CD14-positive monocyte (primary cell): ENCODE measurements at regions of chr20 and their contacts with region 1.

Region 1: GRCh38 chr20:5550733-5551529 is 199.3 kb upstream of the SHLD1 start:
- DNase-seq: no peak
- H3K4me3 ChIP-seq: no peak overlapping the region
- H3K4me3 Mint-ChIP-seq: no peak overlapping the region
- H3K27ac ChIP-seq: peak overlapping the region in 1 of 2 donors; percentile 1
- H3K27ac Mint-ChIP-seq: peak overlapping the region in 3 of 7 donors; percentile 24 to 64 (median 47)
- H3K4me1 ChIP-seq: no peaks in the 10 kb centered on the region
- H3K4me1 Mint-ChIP-seq: no peaks in the 10 kb centered on the region
- H3K27me3 ChIP-seq: no peaks in the 10 kb centered on the region
- H3K27me3 Mint-ChIP-seq: peaks cover 0 to 2% (median 0%) of the 10 kb centered on the region in 3 donors
- CTCF ChIP-seq: no peak

Region 2: GRCh38 chr20:5586720-5587119 is 35.8 kb after region 1 on chr20:
- intact Hi-C with region 1: loop called (anchors 5 to 10 kb)
- DNase-seq: peak in 2 of 3 donors; percentile 12 to 18
- H3K4me3 ChIP-seq: no peak overlapping the region
- H3K4me3 Mint-ChIP-seq: no peak overlapping the region
- H3K27ac ChIP-seq: no peak overlapping the region
- H3K27ac Mint-ChIP-seq: peak overlapping the region in 3 of 7 donors; percentile 12 to 57 (median 18)
- H3K4me1 ChIP-seq: no peaks in the 10 kb centered on the region
- H3K4me1 Mint-ChIP-seq: no peaks in the 10 kb centered on the region
- H3K27me3 ChIP-seq: no peaks in the 10 kb centered on the region
- H3K27me3 Mint-ChIP-seq: no peaks in the 10 kb centered on the region
- CTCF ChIP-seq: no peak